Activated CD4-positive, alpha-beta T cell treated with anti-CD3 and anti-CD28 coated beads for 36 hours (primary cell): ENCODE measurements at regions of chr22 and their contacts with region 1.

Region 1: DNA sequence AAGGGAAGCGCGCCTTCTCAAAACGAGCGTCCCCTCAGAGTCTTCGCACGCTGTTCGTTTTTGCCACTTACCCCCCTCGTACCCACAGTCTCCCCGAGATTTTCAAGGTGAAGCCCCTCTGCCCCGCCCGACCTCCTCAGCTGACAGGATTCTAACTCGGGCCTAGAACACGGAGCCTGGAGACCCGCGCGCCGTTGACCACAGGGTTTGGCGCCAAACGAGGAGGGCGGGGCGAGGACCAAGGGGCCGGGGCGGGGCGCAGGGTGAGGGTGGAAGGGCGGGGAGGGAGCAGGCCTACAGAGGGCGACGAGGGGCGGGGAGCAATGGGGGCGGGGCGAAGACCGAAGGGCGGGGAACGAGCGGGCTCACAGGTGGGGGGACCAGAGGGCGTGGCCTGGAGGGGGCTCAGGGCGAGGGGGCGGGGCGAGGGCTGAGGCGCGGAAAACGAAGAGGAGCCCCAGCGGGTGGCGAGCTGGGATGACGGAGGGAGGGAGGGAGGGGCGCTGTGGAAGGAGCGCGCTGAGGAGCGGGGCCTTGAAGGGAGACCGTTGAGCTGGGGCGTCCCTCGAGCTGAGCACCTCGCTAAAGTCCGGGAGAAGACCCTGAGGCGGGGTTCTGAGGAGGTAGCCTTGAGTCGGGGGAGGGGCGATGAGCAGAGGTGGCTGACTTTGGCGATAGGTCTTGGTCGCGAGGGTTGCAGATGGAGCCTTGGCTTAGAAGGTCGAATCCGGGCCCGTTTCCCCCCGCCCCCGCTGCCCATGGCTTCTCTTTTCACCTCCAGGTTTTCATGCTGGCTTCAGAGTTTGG is at the start of gene DMC1:
- DNase-seq: peak; percentile 100
- ATAC-seq: peak; percentile 94
- H3K4me3 Mint-ChIP-seq: peak within 1 kb of the TSS; percentile 95
- H3K27ac Mint-ChIP-seq: peak within 1 kb of the TSS; percentile 97
- H3K4me1 Mint-ChIP-seq: peaks cover 16% of the 10 kb centered on the region
- H3K27me3 Mint-ChIP-seq: no peaks in the 10 kb centered on the region
- total RNA-seq, gene DMC1: 16.3 to 18.9 TPM

Region 2: DNA sequence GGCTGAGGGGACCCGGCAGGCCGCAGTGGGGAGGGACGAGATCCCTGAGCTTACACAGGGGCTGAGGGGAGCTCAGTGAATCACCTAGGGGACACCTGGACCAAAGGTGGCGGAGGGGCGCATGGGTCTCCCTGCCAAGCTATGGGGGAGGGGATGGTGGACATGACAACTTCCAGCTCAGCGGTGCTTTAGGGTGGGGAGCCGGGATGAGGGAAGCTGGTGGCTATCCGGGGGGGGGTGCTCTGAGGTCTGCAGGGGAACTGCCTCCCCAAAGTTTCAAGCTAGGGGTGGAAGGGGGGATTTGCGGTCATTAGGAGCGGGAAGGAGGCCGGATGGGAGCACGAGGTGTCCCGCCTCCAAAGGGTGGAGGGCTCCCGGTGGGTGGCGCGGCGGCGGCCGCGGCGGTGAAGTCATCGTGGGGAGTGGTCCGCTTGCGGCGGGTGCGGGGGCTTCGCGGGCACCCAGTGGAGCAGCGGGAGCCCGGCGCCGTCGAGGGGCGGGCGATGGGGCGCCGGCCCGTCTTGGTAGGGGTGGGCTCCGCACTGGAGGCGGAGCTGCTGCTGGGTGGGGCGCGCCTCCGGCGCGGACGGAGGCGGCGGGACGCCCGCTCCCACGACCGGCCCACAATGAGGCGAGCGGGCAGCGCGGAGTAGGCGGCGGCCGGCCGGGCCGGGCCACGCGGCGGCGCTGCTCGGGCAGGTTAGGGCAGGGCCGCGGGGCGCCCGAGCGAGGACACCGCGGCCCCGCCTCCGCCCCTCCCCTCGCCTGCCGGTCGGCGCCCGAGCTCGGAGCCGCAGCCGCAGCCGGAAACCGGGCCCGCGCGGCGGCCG is 664.4 kb before region 1 on chr22 and contains the start of gene MICALL1:
- CTCF ChIA-PET with region 1: no interaction called
- POLR2A ChIA-PET with region 1: no interaction called
- intact Hi-C with region 1: loop called in 1 of 2 experiments (anchors 1 kb)
- DNase-seq: peak; percentile 80
- ATAC-seq: peak; percentile 86
- H3K4me3 Mint-ChIP-seq: peak within 1 kb of the TSS; percentile 72
- H3K27ac Mint-ChIP-seq: peak within 1 kb of the TSS; percentile 79
- H3K4me1 Mint-ChIP-seq: peaks cover 21% of the 10 kb centered on the region
- H3K27me3 Mint-ChIP-seq: no peaks in the 10 kb centered on the region
- total RNA-seq, gene MICALL1: 11.2 to 11.8 TPM

Region 3: GRCh38 chr22:38201710-38202436 is 368.3 kb before region 1 on chr22 and contains the start of gene MAFF:
- CTCF ChIA-PET with region 1: interaction called, 3 read pairs
- POLR2A ChIA-PET with region 1: no interaction called
- intact Hi-C with region 1: loop called in 1 of 2 experiments (anchors 1 kb)
- DNase-seq: peak; percentile 97
- ATAC-seq: peak; percentile 72
- H3K4me3 Mint-ChIP-seq: peak within 1 kb of the TSS; percentile 82
- H3K27ac Mint-ChIP-seq: peak within 1 kb of the TSS; percentile 86
- H3K4me1 Mint-ChIP-seq: peaks cover 30% of the 10 kb centered on the region
- H3K27me3 Mint-ChIP-seq: no peaks in the 10 kb centered on the region
- total RNA-seq, gene MAFF: 8.3 to 9.4 TPM

Region 4: DNA sequence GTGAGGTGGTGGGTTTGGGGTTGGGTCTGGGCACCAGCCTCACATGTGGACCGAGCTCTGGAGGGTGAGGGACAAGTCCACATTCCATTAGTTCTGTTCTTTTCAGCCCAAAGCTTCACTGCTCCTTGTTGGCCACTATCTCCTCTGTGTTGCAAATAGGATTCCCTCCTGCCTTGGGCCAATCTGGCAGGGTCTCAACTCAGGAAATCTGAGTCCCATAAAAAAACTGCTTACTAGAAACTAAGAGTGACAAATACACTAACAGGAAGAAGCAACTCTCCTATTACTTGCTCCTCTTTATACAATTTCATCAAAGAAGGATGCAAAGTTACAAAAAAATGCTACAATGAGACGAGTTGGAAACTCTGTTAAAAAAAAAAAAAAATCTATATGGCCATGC is 186.8 kb before region 1 on chr22:
- CTCF ChIA-PET with region 1: no interaction called
- POLR2A ChIA-PET with region 1: no interaction called
- intact Hi-C with region 1: no loop called
- DNase-seq: no peak
- ATAC-seq: no peak
- H3K4me3 Mint-ChIP-seq: no peak overlapping the region
- H3K27ac Mint-ChIP-seq: no peak overlapping the region
- H3K4me1 Mint-ChIP-seq: peaks cover 8% of the 10 kb centered on the region
- H3K27me3 Mint-ChIP-seq: no peaks in the 10 kb centered on the region

Region 5: DNA sequence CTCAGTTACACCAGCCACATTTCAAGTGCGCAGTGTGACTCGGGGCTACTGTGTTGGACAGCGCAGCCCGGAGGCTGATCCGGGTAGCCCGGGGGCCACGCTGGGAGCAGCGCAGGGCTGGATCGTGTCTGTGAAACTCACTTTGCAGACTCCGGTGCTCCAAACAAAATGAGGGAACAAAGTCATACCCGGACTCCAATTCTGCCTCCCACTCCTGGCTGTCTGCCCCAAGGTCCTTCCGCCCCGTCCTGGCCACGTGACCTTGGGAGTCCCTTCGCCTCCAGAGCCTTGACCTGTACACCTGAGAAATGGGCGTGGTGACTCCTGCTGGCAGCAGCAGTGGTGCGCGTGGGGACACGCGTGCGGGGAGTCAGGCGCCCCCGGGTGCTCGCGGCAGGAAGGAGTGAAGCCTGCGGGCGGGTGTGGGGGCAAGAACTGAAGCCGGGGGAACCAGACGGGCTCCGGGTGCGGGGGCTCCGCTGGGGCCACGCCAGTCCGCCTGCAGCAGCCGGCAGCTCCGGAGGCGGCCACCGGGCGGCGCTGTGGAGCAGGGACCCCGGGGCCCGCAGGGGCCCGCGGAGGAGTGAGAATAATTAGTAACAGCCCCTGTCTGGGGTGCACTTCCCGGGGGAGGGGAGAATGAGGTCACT is 157.6 kb before region 1 on chr22:
- CTCF ChIA-PET with region 1: interaction called, 5 read pairs
- POLR2A ChIA-PET with region 1: no interaction called
- intact Hi-C with region 1: loop called (anchors 1 to 5 kb)
- DNase-seq: peak; percentile 74
- ATAC-seq: peak; percentile 77
- H3K4me3 Mint-ChIP-seq: no peak overlapping the region
- H3K27ac Mint-ChIP-seq: no peak overlapping the region
- H3K4me1 Mint-ChIP-seq: peaks cover 3% of the 10 kb centered on the region
- H3K27me3 Mint-ChIP-seq: no peaks in the 10 kb centered on the region

Region 6: GRCh38 chr22:38681784-38682335 is 111.7 kb after region 1 on chr22 and contains the start of gene TOMM22:
- CTCF ChIA-PET with region 1: no interaction called
- POLR2A ChIA-PET with region 1: no interaction called
- intact Hi-C with region 1: loop called in 1 of 2 experiments (anchors 1 kb)
- DNase-seq: peak; percentile 92
- ATAC-seq: peak; percentile 98
- H3K4me3 Mint-ChIP-seq: peak within 1 kb of the TSS; percentile 90
- H3K27ac Mint-ChIP-seq: peak within 1 kb of the TSS; percentile 98
- H3K4me1 Mint-ChIP-seq: peaks cover 20% of the 10 kb centered on the region
- H3K27me3 Mint-ChIP-seq: no peaks in the 10 kb centered on the region
- total RNA-seq, gene TOMM22: 146 to 155 TPM

Region 7: DNA sequence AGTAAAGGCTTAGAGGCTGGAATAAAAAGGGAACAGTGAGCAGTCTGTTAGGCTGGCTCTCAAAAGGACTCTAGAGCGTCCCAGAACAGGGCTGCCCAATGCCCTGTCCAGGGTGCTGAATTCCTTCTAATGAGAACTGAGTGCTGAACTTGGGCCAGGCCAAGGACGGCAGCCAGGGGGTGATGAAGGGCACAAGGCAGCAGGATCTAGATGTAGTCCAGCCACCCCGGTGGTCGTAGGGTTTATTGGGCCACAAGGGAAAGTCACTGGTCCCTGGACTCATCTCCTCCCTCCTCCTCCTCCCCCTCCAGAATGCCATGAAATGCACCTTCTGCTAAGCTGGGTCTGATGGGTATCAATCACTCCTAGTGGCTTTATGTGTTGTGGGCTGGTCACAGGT is 254.4 kb after region 1 on chr22:
- CTCF ChIA-PET with region 1: no interaction called
- POLR2A ChIA-PET with region 1: no interaction called
- intact Hi-C with region 1: no loop called
- DNase-seq: peak; percentile 71
- ATAC-seq: peak; percentile 73
- H3K4me3 Mint-ChIP-seq: no peak overlapping the region
- H3K27ac Mint-ChIP-seq: no peak overlapping the region
- H3K4me1 Mint-ChIP-seq: no peaks in the 10 kb centered on the region
- H3K27me3 Mint-ChIP-seq: no peaks in the 10 kb centered on the region

Region 8: GRCh38 chr22:39502109-39502788 is 932.1 kb after region 1 on chr22 and contains the start of gene MIEF1:
- CTCF ChIA-PET with region 1: no interaction called
- POLR2A ChIA-PET with region 1: no interaction called
- intact Hi-C with region 1: loop called in 1 of 2 experiments (anchors 5 kb)
- DNase-seq: peak; percentile 98
- ATAC-seq: peak; percentile 98
- H3K4me3 Mint-ChIP-seq: peak within 1 kb of the TSS; percentile 76
- H3K27ac Mint-ChIP-seq: peak within 1 kb of the TSS; percentile 94
- H3K4me1 Mint-ChIP-seq: peaks cover 35% of the 10 kb centered on the region
- H3K27me3 Mint-ChIP-seq: no peaks in the 10 kb centered on the region
- total RNA-seq, gene MIEF1: 43.2 to 44.9 TPM